GM12878 (cell line): ENCODE measurements at regions of chr4 and their contacts with region 1.

Region 1: DNA sequence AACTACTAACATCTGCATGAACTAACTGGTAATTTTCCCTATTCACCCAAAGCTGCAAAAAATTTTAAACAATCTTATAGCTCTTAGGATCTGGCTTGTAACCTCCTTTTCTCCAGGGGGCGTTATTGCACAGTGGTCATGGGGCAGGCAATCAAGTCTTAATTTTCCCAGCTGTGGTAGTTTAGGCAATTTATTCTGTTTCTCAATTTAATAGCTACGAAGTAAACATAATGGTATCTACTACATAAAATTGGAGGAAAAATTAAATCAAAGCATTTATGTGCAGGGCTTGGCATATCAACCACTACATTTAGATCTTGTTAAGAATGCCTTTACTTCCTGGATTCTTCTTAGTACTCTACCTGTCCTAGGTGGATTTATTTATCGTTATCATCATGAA is 137.4 kb upstream of the GUCY1A1 start:
- DNase-seq: no peak
- ATAC-seq: peak; percentile 71
- H3K4me3 ChIP-seq: no peak overlapping the region
- H3K27ac ChIP-seq: no peak overlapping the region
- H3K4me1 ChIP-seq: no peaks in the 10 kb centered on the region
- H3K27me3 ChIP-seq: peaks cover 0 to 3% of the 10 kb centered on the region in 2 experiments; a peak in 1 of 4 replicates
- CTCF ChIP-seq: peak; percentile 13 to 55 (median 20); a peak in 3 of 6 replicates
- EP300 ChIP-seq: no peak
- POLR2A ChIP-seq: no peak
- RAD21 ChIP-seq: peak; percentile 51

Region 2: GRCh38 chr4:155543126-155543765 is 14.0 kb after region 1 on chr4:
- CTCF ChIA-PET with region 1: interaction called, 15 read pairs
- POLR2A ChIA-PET with region 1: interaction called, 4 read pairs
- RAD21 ChIA-PET with region 1: interaction called, 5 read pairs
- SMC1A ChIA-PET with region 1: interaction called, 18 read pairs
- in situ Hi-C with region 1: no loop called
- intact Hi-C with region 1: no loop called
- DNase-seq: no peak
- ATAC-seq: peak; percentile 91
- H3K4me3 ChIP-seq: no peak overlapping the region
- H3K27ac ChIP-seq: no peak overlapping the region
- H3K4me1 ChIP-seq: no peaks in the 10 kb centered on the region
- H3K27me3 ChIP-seq: no peaks in the 10 kb centered on the region
- CTCF ChIP-seq: no peak
- EP300 ChIP-seq: no peak
- POLR2A ChIP-seq: no peak
- RAD21 ChIP-seq: no peak

Region 3: GRCh38 chr4:155639704-155640523 is 110.6 kb after region 1 on chr4:
- CTCF ChIA-PET with region 1: interaction called, 3 read pairs
- POLR2A ChIA-PET with region 1: interaction called, 3 read pairs
- RAD21 ChIA-PET with region 1: interaction called, 5 read pairs
- SMC1A ChIA-PET with region 1: interaction called, 10 read pairs
- in situ Hi-C with region 1: no loop called
- intact Hi-C with region 1: no loop called
- DNase-seq: peak; percentile 45
- ATAC-seq: peak; percentile 85
- H3K4me3 ChIP-seq: no peak overlapping the region
- H3K27ac ChIP-seq: no peak overlapping the region
- H3K4me1 ChIP-seq: peaks cover 7% of the 10 kb centered on the region
- H3K27me3 ChIP-seq: no peaks in the 10 kb centered on the region
- CTCF ChIP-seq: no peak
- EP300 ChIP-seq: no peak
- POLR2A ChIP-seq: no peak
- RAD21 ChIP-seq: no peak

Region 4: DNA sequence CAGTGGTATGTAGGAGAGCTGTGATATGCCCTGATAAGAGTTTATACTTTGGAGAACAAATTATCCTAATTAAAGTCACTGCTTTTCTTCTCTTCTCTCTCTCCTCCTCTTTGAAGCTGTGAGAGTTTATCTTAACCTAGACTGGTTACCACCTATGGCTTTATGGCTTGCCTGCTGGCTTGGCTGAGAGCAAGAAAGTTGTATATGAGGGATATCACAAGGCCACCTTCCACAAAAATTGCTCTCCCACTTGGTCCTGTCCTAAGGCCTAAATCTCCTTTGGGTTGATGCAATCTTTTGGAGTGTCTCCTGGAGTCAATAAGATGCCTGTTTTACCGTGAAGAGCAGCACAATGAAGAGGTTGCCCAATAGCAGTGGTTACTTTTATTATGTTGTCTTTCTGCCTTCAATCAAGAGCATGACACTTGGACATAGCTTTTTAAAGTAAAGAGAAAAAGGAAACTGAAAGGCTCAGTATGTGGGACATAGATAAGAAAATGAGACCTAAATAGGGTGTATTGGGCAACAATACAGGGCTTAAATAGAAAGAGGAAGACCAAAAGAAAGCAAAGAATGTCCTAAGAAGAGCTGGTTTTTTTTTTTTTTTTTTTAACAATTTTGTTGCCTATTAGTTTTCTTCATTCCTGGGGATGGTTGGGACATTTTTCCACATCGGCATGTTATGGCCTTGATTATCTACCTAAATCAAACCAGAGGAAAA is 146.6 kb after region 1 on chr4:
- CTCF ChIA-PET with region 1: interaction called, 12 read pairs
- POLR2A ChIA-PET with region 1: no interaction called
- RAD21 ChIA-PET with region 1: interaction called, 11 read pairs
- SMC1A ChIA-PET with region 1: interaction called, 28 read pairs
- in situ Hi-C with region 1: no loop called
- intact Hi-C with region 1: no loop called
- DNase-seq: no peak
- ATAC-seq: peak; percentile 86
- H3K4me3 ChIP-seq: no peak overlapping the region
- H3K27ac ChIP-seq: no peak overlapping the region
- H3K4me1 ChIP-seq: no peaks in the 10 kb centered on the region
- H3K27me3 ChIP-seq: no peaks in the 10 kb centered on the region
- CTCF ChIP-seq: no peak
- EP300 ChIP-seq: no peak
- POLR2A ChIP-seq: no peak
- RAD21 ChIP-seq: no peak

Region 5: GRCh38 chr4:155758481-155759404 is 229.5 kb after region 1 on chr4 and contains the start of gene GUCY1B1:
- CTCF ChIA-PET with region 1: interaction called, 14 read pairs
- POLR2A ChIA-PET with region 1: interaction called, 7 read pairs
- RAD21 ChIA-PET with region 1: interaction called, 19 read pairs
- SMC1A ChIA-PET with region 1: interaction called, 17 read pairs
- in situ Hi-C with region 1: no loop called
- intact Hi-C with region 1: no loop called
- DNase-seq: peak; percentile 44
- ATAC-seq: peak; percentile 96
- H3K4me3 ChIP-seq: 0 out of 2 replicates have a peak within 1 kb of the TSS, but pooled peaks have one; percentile 44
- H3K27ac ChIP-seq: no peak within 1 kb of the TSS
- H3K4me1 ChIP-seq: no peaks in the 10 kb centered on the region
- H3K27me3 ChIP-seq: peaks cover 0 to 7% of the 10 kb centered on the region in 2 experiments; a peak in 2 of 4 replicates
- CTCF ChIP-seq: peak; percentile 13 to 40 (median 24); a peak in 4 of 6 replicates
- EP300 ChIP-seq: 0 out of 4 replicates have a peak, but pooled peaks of 1 of the 2 experiments have one; percentile 13
- POLR2A ChIP-seq: peak; percentile 61; the same call in 1 of the 2 replicates
- RAD21 ChIP-seq: no peak
- polyA plus RNA-seq, gene GUCY1B1: 0.60 to 1.1 TPM

Region 6: GRCh38 chr4:155777971-155778735 is 248.9 kb after region 1 on chr4:
- CTCF ChIA-PET with region 1: interaction called, 27 read pairs
- POLR2A ChIA-PET with region 1: interaction called, 3 read pairs
- RAD21 ChIA-PET with region 1: interaction called, 17 read pairs
- SMC1A ChIA-PET with region 1: interaction called, 18 read pairs
- in situ Hi-C with region 1: no loop called
- intact Hi-C with region 1: no loop called
- DNase-seq: no peak
- ATAC-seq: no peak
- H3K4me3 ChIP-seq: no peak overlapping the region
- H3K27ac ChIP-seq: no peak overlapping the region
- H3K4me1 ChIP-seq: no peaks in the 10 kb centered on the region
- H3K27me3 ChIP-seq: no peaks in the 10 kb centered on the region
- CTCF ChIP-seq: no peak
- EP300 ChIP-seq: no peak
- POLR2A ChIP-seq: no peak
- RAD21 ChIP-seq: no peak